ENCODE measurements at regions of chr6 and their contacts with region 1.

Region 1: DNA sequence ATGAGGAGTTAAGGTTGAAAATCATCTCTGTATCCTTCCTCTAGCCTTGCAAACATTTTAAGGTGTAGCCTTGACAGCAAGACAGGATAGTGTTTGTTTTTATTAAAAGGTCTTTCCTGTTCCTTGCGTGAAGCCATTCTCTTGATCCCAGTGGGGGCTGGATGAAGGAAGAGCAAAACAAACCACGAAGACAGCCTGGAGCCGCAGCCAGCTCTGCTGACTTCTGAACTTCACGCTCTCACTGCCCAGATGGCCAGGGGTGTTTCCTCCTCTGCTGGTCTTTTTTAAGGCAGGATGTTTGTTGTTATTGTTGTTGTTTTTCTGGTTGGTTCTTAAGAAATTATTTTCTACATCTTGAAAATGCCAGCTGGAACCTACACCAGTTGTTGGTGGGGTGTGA is 156.4 kb downstream of the MTHFD1L start:
- DNase-seq: no peak
- H3K4me3 ChIP-seq: no peak overlapping the region
- H3K27ac ChIP-seq: peak overlapping the region in 4 of 59 donors; percentile 4 to 33 (median 16)
- H3K27me3 ChIP-seq: no peaks in the 10 kb centered on the region
- CTCF ChIP-seq: no peak

Region 2: GRCh38 chr6:150269656-150270223 is 752.2 kb before region 1 on chr6:
- intact Hi-C with region 1: no loop called
- DNase-seq: peak in 1 of 10 donors; percentile 50
- H3K4me3 ChIP-seq: no peak overlapping the region
- H3K27ac ChIP-seq: no peak overlapping the region
- H3K27me3 ChIP-seq: peaks cover 0 to 5% (median 0%) of the 10 kb centered on the region in 45 donors
- CTCF ChIP-seq: no peak

Region 3: GRCh38 chr6:150865406-150866146 is 156.3 kb before region 1 on chr6 and contains the start of gene MTHFD1L:
- intact Hi-C with region 1: no loop called
- DNase-seq: peak; percentile 31 to 75 (median 55)
- H3K4me3 ChIP-seq: peak within 1 kb of the TSS; percentile 53 to 88 (median 79)
- H3K27ac ChIP-seq: peak within 1 kb of the TSS in 58 of 59 donors; percentile 41 to 97 (median 88)
- H3K27me3 ChIP-seq: no peaks in the 10 kb centered on the region
- CTCF ChIP-seq: peak in 54 of 56 donors; percentile 16 to 69 (median 47)
- total RNA-seq, gene MTHFD1L: 13.5 to 41.0 (median 24.9) TPM

Region 4: DNA sequence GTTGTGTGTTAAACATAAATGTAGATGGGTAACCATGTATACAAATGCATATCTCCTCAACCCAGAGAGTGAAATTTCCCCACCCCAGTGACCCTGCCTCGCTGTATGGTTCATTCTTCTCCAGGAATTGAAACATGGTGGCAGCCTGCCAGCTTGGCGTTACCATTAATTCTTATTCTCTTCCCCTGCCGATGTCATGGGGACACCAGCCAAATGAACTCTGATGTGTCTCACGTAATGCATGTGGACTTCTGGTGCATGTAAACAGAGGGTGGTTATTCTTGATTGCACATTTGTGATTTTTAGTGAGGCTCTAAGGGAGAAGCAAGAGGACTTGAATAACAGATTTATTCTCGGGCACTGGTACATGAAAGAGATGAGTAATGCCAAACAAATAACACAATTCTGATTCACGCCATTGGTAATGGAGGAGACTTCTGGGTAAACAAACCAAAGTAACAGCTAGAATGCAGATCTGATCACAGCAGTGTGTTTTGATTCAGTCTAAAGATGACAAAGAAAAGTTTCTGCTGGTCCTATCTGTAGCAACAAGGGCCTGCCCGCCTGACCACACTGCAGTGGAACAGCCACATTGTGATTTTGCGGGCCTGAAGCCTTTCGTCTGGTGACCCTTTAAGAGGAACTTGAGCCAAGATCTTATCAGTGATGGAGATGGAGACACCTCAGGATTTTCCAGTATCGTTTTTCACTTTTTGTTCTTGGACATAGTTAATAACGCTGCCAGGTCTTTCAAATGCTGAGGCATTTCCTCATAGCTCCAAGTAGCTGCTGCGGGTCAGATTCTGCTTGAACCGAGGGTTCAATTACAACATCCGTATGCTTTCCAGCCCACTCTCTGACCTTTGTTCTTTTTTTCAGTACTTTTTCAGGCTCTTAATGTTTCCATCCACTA is 46.0 kb after region 1 on chr6:
- intact Hi-C with region 1: loop called in 1 of 2 experiments (anchors 5 kb)
- DNase-seq: peak in 3 of 10 donors; percentile 25 to 44 (median 28)
- H3K4me3 ChIP-seq: peak overlapping the region in 13 of 59 donors; percentile 0 to 48 (median 13)
- H3K27ac ChIP-seq: peak overlapping the region; percentile 9 to 93 (median 81)
- H3K27me3 ChIP-seq: no peaks in the 10 kb centered on the region
- CTCF ChIP-seq: no peak

Region 5: GRCh38 chr6:151141685-151142084 is 119.8 kb after region 1 on chr6:
- intact Hi-C with region 1: loop called in 1 of 2 experiments (anchors 10 kb)
- DNase-seq: no peak
- H3K4me3 ChIP-seq: no peak overlapping the region
- H3K27ac ChIP-seq: no peak overlapping the region
- H3K27me3 ChIP-seq: peaks cover 0 to 5% (median 0%) of the 10 kb centered on the region in 45 donors
- CTCF ChIP-seq: no peak